B cell (primary cell): ENCODE measurements at regions of chr9 and their contacts with region 1.

Region 1: GRCh38 chr9:128809036-128809599 is 9.2 kb upstream of the ENDOG start:
- DNase-seq: no peak
- ATAC-seq: no peak
- H3K4me3 ChIP-seq: no peak overlapping the region
- H3K4me3 Mint-ChIP-seq: no peak overlapping the region
- H3K27ac ChIP-seq: no peak overlapping the region
- H3K27ac Mint-ChIP-seq: no peak overlapping the region
- H3K4me1 ChIP-seq: no peaks in the 10 kb centered on the region
- H3K4me1 Mint-ChIP-seq: no peaks in the 10 kb centered on the region
- H3K27me3 ChIP-seq: no peaks in the 10 kb centered on the region
- H3K27me3 Mint-ChIP-seq: no peaks in the 10 kb centered on the region
- CTCF ChIP-seq: no peak

Region 2: GRCh38 chr9:128621730-128622455 is 187.2 kb before region 1 on chr9:
- CTCF ChIA-PET with region 1: no interaction called
- POLR2A ChIA-PET with region 1: interaction called, 14 read pairs
- intact Hi-C with region 1: no loop called
- DNase-seq: no peak
- ATAC-seq: no peak
- H3K4me3 ChIP-seq: no peak overlapping the region
- H3K4me3 Mint-ChIP-seq: no peak overlapping the region
- H3K27ac ChIP-seq: no peak overlapping the region
- H3K27ac Mint-ChIP-seq: no peak overlapping the region
- H3K4me1 ChIP-seq: no peaks in the 10 kb centered on the region
- H3K4me1 Mint-ChIP-seq: no peaks in the 10 kb centered on the region
- H3K27me3 ChIP-seq: no peaks in the 10 kb centered on the region
- H3K27me3 Mint-ChIP-seq: no peaks in the 10 kb centered on the region
- CTCF ChIP-seq: no peak

Region 3: DNA sequence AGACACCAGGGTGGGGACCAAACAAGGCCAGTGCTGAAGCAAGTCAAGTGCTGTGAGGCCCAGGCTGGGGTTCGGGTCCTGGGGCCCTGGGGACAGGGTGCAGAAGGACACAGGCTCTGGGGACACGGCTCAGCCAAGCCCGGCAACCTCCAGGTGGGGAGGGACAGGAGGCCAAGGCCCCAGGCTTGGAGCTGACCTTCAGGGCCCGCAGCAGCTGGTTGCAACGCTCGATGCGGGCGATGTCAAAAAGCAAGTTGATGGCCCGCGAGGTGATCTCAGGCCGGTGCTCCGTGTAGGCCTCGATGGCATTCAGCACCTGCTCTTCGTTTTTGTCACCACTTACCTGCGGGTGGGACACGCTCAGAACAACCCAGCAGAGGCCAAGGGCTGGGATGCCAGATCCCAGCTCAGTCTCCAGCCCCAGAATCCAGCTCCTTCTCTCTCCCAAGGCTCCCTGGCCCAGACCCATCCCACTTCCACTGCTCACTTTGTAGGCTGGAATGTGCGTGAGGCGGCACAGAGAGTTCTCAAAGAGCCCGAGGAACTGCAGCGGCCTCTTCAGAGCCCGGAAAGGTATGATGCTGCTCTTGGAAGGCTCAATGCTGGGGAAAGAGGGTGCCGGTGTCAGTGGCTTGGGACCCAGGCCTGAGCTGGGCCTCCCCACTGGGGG is 58.1 kb before region 1 on chr9:
- CTCF ChIA-PET with region 1: no interaction called
- POLR2A ChIA-PET with region 1: no interaction called
- intact Hi-C with region 1: no loop called
- DNase-seq: peak; percentile 3
- ATAC-seq: no peak
- H3K4me3 ChIP-seq: no peak overlapping the region
- H3K4me3 Mint-ChIP-seq: no peak overlapping the region
- H3K27ac ChIP-seq: no peak overlapping the region
- H3K27ac Mint-ChIP-seq: no peak overlapping the region
- H3K4me1 ChIP-seq: no peaks in the 10 kb centered on the region
- H3K4me1 Mint-ChIP-seq: no peaks in the 10 kb centered on the region
- H3K27me3 ChIP-seq: no peaks in the 10 kb centered on the region
- H3K27me3 Mint-ChIP-seq: no peaks in the 10 kb centered on the region
- CTCF ChIP-seq: no peak